HepG2 (cell line): ENCODE measurements at regions of chr1 and their contacts with region 1.

Region 1: DNA sequence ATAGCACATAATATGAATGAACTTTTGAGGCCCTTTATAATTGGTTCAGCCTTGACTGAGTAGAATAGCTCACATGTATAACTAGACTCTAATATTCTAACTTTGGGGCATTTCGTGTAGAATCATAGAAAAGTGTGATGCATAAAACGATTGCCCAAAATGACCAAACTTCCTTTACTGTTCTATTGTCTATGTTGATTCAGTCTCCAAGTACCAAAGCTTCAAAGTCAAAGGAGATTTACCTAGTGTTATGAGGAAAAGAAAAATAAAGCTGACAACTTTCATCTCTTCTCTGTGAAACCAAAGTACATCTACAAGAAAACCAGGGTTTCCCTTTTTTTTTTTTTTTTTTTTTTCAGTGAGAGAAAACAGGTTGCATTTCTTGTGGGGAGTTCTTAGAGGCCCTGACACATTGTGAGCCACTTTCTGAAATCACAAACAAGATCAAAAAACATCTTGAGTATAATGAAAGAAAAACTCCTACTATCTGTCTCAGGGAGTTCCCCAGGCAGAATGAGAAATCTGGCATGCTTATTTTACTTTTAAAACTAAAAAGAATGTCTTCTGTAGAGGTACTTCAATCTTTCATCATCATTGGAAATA is 183.4 kb downstream of the TNFSF18 start:
- DNase-seq: no peak
- ATAC-seq: no peak
- H3K4me3 ChIP-seq: no peak overlapping the region
- H3K27ac ChIP-seq: no peak overlapping the region
- H3K4me1 ChIP-seq: no peaks in the 10 kb centered on the region
- H3K27me3 ChIP-seq: no peaks in the 10 kb centered on the region
- CTCF ChIP-seq: no peak
- EP300 ChIP-seq: no peak
- POLR2A ChIP-seq: no peak
- RAD21 ChIP-seq: no peak

Region 2: GRCh38 chr1:172793823-172794222 is 73.5 kb before region 1 on chr1:
- CTCF ChIA-PET with region 1: no interaction called
- POLR2A ChIA-PET with region 1: no interaction called
- in situ Hi-C with region 1: no loop called
- intact Hi-C with region 1: loop called (anchors 2 kb)
- DNase-seq: no peak
- ATAC-seq: no peak
- H3K4me3 ChIP-seq: no peak overlapping the region
- H3K27ac ChIP-seq: no peak overlapping the region
- H3K4me1 ChIP-seq: no peaks in the 10 kb centered on the region
- H3K27me3 ChIP-seq: no peaks in the 10 kb centered on the region
- CTCF ChIP-seq: no peak
- EP300 ChIP-seq: no peak
- POLR2A ChIP-seq: no peak
- RAD21 ChIP-seq: no peak